A673 (cell line): ENCODE measurements at regions of chr1 and their contacts with region 1.

Region 1: GRCh38 chr1:19311959-19312781 is at the starts of genes AKR7A2 and SLC66A1:
- DNase-seq: peak; percentile 93
- H3K4me3 ChIP-seq: peak within 1 kb of the TSS; percentile 85
- H3K27ac ChIP-seq: peak within 1 kb of the TSS; percentile 78
- H3K4me1 ChIP-seq: peaks cover 7% of the 10 kb centered on the region
- H3K27me3 ChIP-seq: no peaks in the 10 kb centered on the region
- CTCF ChIP-seq: no peak
- total RNA-seq, gene AKR7A2: 57.2 and 61.5 TPM in 2 replicates
- total RNA-seq, gene SLC66A1: 18.3 and 22.0 TPM in 2 replicates

Region 2: GRCh38 chr1:19251305-19252196 is 60.6 kb before region 1 on chr1 and contains the starts of genes EMC1 and MRTO4:
- CTCF ChIA-PET with region 1: no interaction called
- POLR2A ChIA-PET with region 1: no interaction called
- intact Hi-C with region 1: loop called (anchors 2 kb)
- DNase-seq: peak; percentile 94
- H3K4me3 ChIP-seq: peak within 1 kb of the TSS; percentile 84
- H3K27ac ChIP-seq: peak within 1 kb of the TSS; percentile 99
- H3K4me1 ChIP-seq: peaks cover 25% of the 10 kb centered on the region
- H3K27me3 ChIP-seq: no peaks in the 10 kb centered on the region
- CTCF ChIP-seq: no peak
- total RNA-seq, gene EMC1: 75.9 and 84.3 TPM in 2 replicates
- total RNA-seq, gene MRTO4: 125 and 145 TPM in 2 replicates

Region 3: GRCh38 chr1:19495799-19496624 is 183.8 kb after region 1 on chr1:
- CTCF ChIA-PET with region 1: no interaction called
- POLR2A ChIA-PET with region 1: no interaction called
- intact Hi-C with region 1: no loop called
- DNase-seq: no peak
- H3K4me3 ChIP-seq: no peak overlapping the region
- H3K27ac ChIP-seq: no peak overlapping the region
- H3K4me1 ChIP-seq: no peaks in the 10 kb centered on the region
- H3K27me3 ChIP-seq: no peaks in the 10 kb centered on the region
- CTCF ChIP-seq: no peak